ENCODE measurements at regions of chr4 and their contacts with region 1.

Region 1: GRCh38 chr4:24419181-24420034 is 164.9 kb downstream of the DHX15 start:
- DNase-seq: peak; percentile 82
- ATAC-seq: peak; percentile 74
- H3K4me3 Mint-ChIP-seq: no peak overlapping the region
- H3K27ac Mint-ChIP-seq: no peak overlapping the region
- H3K4me1 Mint-ChIP-seq: peaks cover 3% of the 10 kb centered on the region
- H3K27me3 Mint-ChIP-seq: peaks cover 8% of the 10 kb centered on the region

Region 2: DNA sequence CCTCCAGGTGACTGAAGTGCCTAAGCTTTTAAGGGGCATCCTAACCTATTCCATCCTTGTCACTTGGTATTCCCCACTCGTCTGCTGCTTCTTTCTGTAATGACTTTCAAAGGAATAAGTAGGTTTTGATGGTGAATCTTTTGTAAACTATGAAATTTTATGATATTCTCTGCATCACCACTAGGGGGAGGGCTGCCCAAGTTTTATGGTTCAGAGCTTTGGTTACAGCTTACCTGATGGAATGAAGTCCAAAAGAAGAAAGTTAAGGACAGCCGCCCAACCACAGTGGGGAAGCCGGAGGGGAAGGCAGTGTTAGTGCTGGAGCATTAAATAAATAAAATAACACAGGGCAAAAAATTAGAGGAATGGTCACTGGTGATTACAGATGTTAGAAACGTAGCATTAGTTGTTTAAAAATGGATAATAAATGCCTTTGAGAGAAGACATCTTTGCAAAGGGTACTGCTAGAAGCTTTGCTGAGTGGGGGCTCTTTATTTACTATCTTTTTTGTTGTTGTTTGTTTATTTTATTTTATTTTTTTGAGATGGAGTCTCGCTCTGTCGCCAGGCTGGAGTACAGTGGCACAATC is 1521.8 kb before region 1 on chr4:
- CTCF ChIA-PET with region 1: interaction called, 7 read pairs
- POLR2A ChIA-PET with region 1: no interaction called
- intact Hi-C with region 1: loop called in 1 of 2 experiments (anchors 1 kb)
- DNase-seq: peak; percentile 42
- ATAC-seq: no peak
- H3K4me3 Mint-ChIP-seq: no peak overlapping the region
- H3K27ac Mint-ChIP-seq: no peak overlapping the region
- H3K4me1 Mint-ChIP-seq: no peaks in the 10 kb centered on the region
- H3K27me3 Mint-ChIP-seq: no peaks in the 10 kb centered on the region

Region 3: DNA sequence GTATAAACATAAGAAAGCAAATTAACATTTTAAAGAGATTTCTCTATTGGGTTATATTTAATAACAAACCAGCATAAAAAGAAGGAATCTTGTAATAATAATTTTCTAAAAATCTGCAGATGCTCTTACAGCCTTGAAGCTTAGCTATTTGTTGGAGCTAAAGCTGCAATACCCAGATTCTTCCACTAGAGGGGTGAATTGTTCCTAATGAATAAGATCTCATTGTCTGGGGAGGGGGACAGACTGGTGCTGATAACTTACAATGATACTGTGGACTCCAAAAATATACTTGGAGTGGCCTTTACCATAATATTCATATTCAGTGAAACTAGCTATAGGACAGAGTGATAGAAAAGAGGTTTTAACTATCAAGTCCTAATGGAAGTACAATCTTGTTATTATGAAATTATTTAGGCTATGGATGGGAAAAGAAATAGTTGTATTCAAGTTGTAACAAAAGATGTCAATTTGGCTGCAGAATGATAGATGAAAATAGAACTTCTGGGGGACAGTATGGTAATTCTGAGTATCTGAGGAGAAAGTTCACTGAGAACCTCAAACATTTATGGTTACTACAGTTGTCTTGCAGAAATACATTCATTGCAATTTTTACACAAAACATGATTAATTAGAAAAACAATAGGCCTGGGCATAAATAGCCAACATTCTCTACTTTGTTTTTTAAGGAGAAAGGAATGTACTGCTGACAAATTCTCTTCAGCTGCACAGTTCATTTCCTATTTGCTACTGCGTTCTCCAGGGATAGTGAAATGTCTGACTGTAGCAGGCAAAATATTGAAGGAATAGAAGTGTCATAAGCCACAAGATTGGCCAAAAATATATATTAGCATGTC is 1283.4 kb before region 1 on chr4:
- CTCF ChIA-PET with region 1: interaction called, 6 read pairs
- POLR2A ChIA-PET with region 1: no interaction called
- intact Hi-C with region 1: loop called (anchors 1 kb)
- DNase-seq: no peak
- ATAC-seq: no peak
- H3K4me3 Mint-ChIP-seq: no peak overlapping the region
- H3K27ac Mint-ChIP-seq: no peak overlapping the region
- H3K4me1 Mint-ChIP-seq: no peaks in the 10 kb centered on the region
- H3K27me3 Mint-ChIP-seq: no peaks in the 10 kb centered on the region

Region 4: GRCh38 chr4:23333946-23334878 is 1085.2 kb before region 1 on chr4:
- CTCF ChIA-PET with region 1: no interaction called
- POLR2A ChIA-PET with region 1: no interaction called
- intact Hi-C with region 1: loop called in 1 of 2 experiments (anchors 5 kb)
- DNase-seq: peak; percentile 49
- ATAC-seq: peak; percentile 89
- H3K4me3 Mint-ChIP-seq: peak overlapping the region; percentile 45
- H3K27ac Mint-ChIP-seq: peak overlapping the region; percentile 92
- H3K4me1 Mint-ChIP-seq: peaks cover 29% of the 10 kb centered on the region
- H3K27me3 Mint-ChIP-seq: no peaks in the 10 kb centered on the region

Region 5: DNA sequence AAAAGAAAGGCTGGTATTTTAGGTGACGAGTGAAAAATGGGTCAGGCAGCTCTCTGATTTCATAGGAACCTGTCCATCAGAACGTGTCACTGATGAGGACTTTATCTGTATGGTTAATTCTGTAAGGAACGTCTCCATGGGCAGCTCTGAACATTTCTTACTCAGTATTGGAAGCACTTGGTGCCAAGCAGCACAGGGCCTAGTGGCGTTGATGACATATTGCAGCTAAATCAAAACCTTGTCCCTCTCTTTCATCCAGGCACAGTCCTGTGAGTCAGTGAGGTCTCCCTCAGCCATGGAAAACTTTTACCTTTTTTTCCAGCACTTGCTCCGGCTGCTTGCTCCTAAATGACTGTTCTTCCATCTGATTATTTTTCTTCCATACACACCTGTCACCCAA is 137.0 kb before region 1 on chr4:
- CTCF ChIA-PET with region 1: no interaction called
- POLR2A ChIA-PET with region 1: no interaction called
- intact Hi-C with region 1: no loop called
- DNase-seq: no peak
- ATAC-seq: no peak
- H3K4me3 Mint-ChIP-seq: no peak overlapping the region
- H3K27ac Mint-ChIP-seq: no peak overlapping the region
- H3K4me1 Mint-ChIP-seq: no peaks in the 10 kb centered on the region
- H3K27me3 Mint-ChIP-seq: peaks cover 1% of the 10 kb centered on the region

Region 6: GRCh38 chr4:24456431-24456830 is 37.0 kb after region 1 on chr4:
- CTCF ChIA-PET with region 1: no interaction called
- POLR2A ChIA-PET with region 1: no interaction called
- intact Hi-C with region 1: no loop called
- DNase-seq: no peak
- ATAC-seq: no peak
- H3K4me3 Mint-ChIP-seq: no peak overlapping the region
- H3K27ac Mint-ChIP-seq: no peak overlapping the region
- H3K4me1 Mint-ChIP-seq: no peaks in the 10 kb centered on the region
- H3K27me3 Mint-ChIP-seq: peaks cover 25% of the 10 kb centered on the region